PC-9 (cell line): ENCODE measurements at regions of chr15 and their contacts with region 1.

Region 1: DNA sequence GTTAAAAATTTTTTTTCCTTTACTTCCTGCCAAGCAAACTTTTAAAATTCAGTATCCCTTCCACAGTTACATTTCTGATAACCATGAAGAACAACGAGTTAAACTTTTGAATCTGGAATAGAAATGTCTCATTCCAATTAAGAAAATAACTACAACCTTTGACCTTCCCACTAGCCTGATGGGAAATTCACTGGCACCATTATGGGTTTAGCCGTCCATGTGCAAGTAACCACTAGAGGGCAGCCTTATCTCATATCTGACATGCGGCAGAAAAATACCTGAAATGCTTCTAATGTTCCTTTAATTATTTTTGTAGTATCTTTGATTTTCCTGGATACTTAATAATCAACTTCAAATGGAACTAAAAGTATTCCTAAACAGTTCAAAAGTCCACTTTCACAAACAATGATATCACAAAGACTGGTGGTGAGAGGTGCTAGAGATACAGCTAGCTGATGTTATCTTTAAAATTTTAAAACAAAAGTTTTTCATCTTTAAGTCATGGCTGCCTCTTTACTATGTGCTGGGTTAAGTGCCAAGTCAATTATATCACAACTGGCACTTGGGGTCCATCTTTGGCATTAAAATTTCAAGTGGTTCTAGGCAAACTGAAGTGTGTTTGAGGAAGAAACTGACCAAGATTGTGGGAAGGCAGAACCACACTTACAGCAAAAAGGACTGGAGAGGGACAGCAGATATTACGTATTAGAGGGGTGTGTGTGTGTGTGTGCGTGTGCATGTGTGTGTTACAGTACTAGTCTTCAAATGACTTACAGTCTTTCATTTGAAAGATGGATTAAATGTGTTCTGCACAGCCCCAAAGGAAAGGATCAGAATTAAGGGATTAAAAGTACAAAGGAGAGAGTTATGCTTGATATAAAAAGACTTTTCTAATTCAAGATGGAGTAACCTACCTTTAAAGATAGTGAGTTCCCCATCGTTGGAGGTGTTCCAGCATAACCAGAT is 107.1 kb upstream of the ICE2 start:
- DNase-seq: peak; percentile 38 to 48
- H3K4me3 ChIP-seq: no peak overlapping the region
- H3K27ac ChIP-seq: no peak overlapping the region
- H3K4me1 ChIP-seq: peaks cover 8% of the 10 kb centered on the region
- H3K27me3 ChIP-seq: no peaks in the 10 kb centered on the region
- CTCF ChIP-seq: peak; percentile 82

Region 2: DNA sequence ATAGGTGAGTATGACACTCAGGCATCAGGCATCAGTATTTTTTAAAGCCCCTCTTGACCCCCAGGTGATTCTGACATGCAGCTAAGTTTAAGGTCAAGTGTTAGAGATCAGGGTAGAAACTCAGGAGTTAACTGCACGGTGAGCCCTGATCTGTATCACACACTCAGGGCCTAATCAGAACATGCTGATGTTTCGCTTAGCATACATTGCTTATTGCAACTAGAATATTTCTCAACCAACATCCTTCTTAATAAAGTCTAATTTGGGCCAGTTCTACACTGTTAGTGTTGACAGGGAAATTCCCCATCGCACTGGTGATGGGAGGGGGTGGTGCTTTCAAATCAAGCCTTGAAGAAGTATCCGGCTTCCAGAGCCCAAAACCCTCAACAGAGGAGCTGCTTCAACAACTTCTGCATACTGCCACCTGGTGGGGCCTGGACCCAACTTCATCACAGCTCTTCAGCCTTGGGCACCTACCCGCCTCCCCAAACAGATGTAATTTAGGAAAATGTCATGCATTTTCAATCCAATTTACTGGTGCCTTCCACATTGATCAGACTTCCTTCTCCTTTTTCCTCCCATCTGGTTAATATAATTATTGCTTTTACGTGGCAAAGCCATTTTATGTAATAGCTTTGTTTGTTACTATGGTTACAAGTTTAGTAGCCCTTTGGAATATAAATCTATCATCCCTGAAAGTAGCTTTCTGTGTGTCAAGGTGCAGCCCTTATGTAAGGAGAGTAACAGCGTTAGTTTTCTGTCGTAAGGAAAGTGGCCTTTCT is 330.8 kb after region 1 on chr15:
- CTCF ChIA-PET with region 1: interaction called, 3 read pairs
- POLR2A ChIA-PET with region 1: no interaction called
- intact Hi-C with region 1: loop called (anchors 5 kb)
- DNase-seq: peak; percentile 52 to 56
- H3K4me3 ChIP-seq: no peak overlapping the region
- H3K27ac ChIP-seq: no peak overlapping the region
- H3K4me1 ChIP-seq: peaks cover 26% of the 10 kb centered on the region
- H3K27me3 ChIP-seq: no peaks in the 10 kb centered on the region
- CTCF ChIP-seq: peak; percentile 78

Region 3: DNA sequence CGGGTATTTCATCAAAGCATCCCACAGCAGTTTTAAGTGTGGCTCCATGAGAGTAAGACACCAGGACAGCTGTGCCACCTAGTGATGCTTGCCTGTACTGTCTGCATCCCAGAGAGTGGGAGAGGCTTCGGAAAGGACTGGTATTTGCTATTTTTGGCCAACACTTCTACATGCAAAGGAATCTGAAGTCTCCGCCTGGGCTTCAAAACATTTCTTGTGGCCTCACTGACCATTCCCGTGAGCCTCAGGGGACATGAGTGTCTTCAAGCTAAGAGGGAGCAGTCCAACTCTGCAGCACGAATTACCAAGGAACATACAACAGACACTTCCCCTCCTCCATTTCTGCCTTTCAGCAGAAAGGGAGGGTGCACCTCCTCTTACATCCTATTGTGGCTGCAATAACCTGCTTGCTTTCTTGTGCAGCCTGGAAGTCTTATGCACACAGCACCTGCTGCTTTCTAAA is 465.6 kb after region 1 on chr15:
- CTCF ChIA-PET with region 1: no interaction called
- POLR2A ChIA-PET with region 1: no interaction called
- intact Hi-C with region 1: loop called (anchors 2 kb)
- DNase-seq: peak in 1 of 2 experiments; percentile 29
- H3K4me3 ChIP-seq: no peak overlapping the region
- H3K27ac ChIP-seq: no peak overlapping the region
- H3K4me1 ChIP-seq: no peaks in the 10 kb centered on the region
- H3K27me3 ChIP-seq: no peaks in the 10 kb centered on the region
- CTCF ChIP-seq: peak; percentile 64

Region 4: GRCh38 chr15:61621146-61621545 is 1035.1 kb after region 1 on chr15:
- CTCF ChIA-PET with region 1: no interaction called
- POLR2A ChIA-PET with region 1: no interaction called
- intact Hi-C with region 1: loop called (anchors 5 kb)
- DNase-seq: peak in 1 of 2 experiments; percentile 3
- H3K4me3 ChIP-seq: no peak overlapping the region
- H3K27ac ChIP-seq: no peak overlapping the region
- H3K4me1 ChIP-seq: no peaks in the 10 kb centered on the region
- H3K27me3 ChIP-seq: peaks cover 27% of the 10 kb centered on the region
- CTCF ChIP-seq: peak; percentile 44